ENCODE measurements at regions of chr6 and their contacts with region 1.

Region 1: GRCh38 chr6:38225766-38226165 is 406.2 kb downstream of the ZFAND3 start:
- DNase-seq: no peak
- H3K4me3 ChIP-seq: no peak overlapping the region
- CTCF ChIP-seq: no peak

Region 2: GRCh38 chr6:38179300-38179699 is 46.5 kb before region 1 on chr6:
- in situ Hi-C with region 1: loop called (anchors 5 kb)
- DNase-seq: no peak
- H3K4me3 ChIP-seq: no peak overlapping the region
- CTCF ChIP-seq: no peak

Measured in astrocyte of the cerebellum (primary cell).